Activated T-helper 2 cell treated with anti-CD3 and anti-CD28 coated beads, Interferon-gamma antibody, Interleukin-2, Interleukin-4, amounts not matched to agents 10 μg/mL and 5 μg/mL and 100 μg/mL, durations not matched to agents 14 hours and 24 hours and 36 hours (primary cell): ENCODE measurements at regions of chr3 and their contacts with region 1.

Region 1: GRCh38 chr3:129893581-129894070 is at the start of gene TMCC1:
- DNase-seq: peak; percentile 83
- H3K4me3 Mint-ChIP-seq: peak within 1 kb of the TSS; percentile 88
- H3K27ac Mint-ChIP-seq: peak within 1 kb of the TSS; percentile 85
- H3K4me1 Mint-ChIP-seq: peaks cover 35% of the 10 kb centered on the region
- H3K27me3 Mint-ChIP-seq: no peaks in the 10 kb centered on the region
- total RNA-seq, gene TMCC1: 18.0 and 21.3 TPM in 2 replicates

Region 2: GRCh38 chr3:129606636-129607390 is 286.8 kb before region 1 on chr3 and contains the start of gene PLXND1:
- intact Hi-C with region 1: loop called (anchors 5 kb)
- DNase-seq: peak; percentile 13
- H3K4me3 Mint-ChIP-seq: peak within 1 kb of the TSS; percentile 85
- H3K27ac Mint-ChIP-seq: peak within 1 kb of the TSS; percentile 31
- H3K4me1 Mint-ChIP-seq: peaks cover 10% of the 10 kb centered on the region
- H3K27me3 Mint-ChIP-seq: peaks cover 48% of the 10 kb centered on the region
- total RNA-seq, gene PLXND1: 1.3 and 2.7 TPM in 2 replicates

Region 3: DNA sequence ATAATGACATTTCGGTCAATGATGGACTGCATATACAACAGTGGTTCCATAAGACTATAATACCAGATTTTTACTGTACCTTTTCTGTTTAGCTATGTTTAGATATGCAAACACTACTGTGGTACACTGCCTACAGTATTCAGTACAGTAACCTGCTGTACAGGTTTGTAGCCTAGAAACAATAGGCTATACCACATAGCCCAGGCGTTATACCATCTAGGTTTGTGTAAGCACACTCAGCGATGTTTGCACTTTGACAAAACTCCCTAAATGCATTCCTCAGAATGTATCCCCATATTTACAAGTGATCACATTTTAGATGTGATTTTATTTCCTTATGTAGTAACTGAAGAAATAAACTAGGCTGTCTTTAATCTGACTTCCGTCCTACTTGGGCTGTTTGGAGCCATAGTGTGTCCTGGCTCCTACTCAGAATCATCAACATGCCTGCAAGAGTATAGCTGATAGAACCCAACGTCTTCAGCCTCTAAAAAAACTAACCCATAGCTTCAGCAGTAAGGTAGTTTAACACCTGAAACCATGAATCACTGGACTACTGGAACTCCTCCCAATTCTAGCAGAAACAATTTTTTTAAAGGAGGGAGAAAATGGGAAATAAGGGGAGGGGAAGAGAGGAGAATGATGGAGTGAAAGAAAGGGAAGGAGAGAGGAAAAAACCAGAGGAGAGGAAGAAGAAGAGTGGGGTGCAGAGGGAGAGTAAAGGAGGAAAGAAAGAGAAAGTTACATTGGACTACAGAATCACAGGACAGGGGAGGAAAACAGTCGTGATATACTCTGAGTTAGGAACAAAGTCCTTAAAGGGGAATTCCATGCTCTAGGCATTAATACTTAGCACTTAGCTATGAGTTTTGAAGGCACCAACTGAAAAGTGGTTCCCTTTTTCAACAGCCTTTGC is 219.5 kb before region 1 on chr3:
- intact Hi-C with region 1: no loop called
- DNase-seq: no peak
- H3K4me3 Mint-ChIP-seq: no peak overlapping the region
- H3K27ac Mint-ChIP-seq: no peak overlapping the region
- H3K4me1 Mint-ChIP-seq: peaks cover 2% of the 10 kb centered on the region
- H3K27me3 Mint-ChIP-seq: no peaks in the 10 kb centered on the region

Region 4: GRCh38 chr3:130111185-130111864 is 217.7 kb after region 1 on chr3:
- intact Hi-C with region 1: loop called (anchors 5 kb)
- DNase-seq: peak; percentile 97
- H3K4me3 Mint-ChIP-seq: peak overlapping the region; percentile 92
- H3K27ac Mint-ChIP-seq: peak overlapping the region; percentile 98
- H3K4me1 Mint-ChIP-seq: peaks cover 13% of the 10 kb centered on the region
- H3K27me3 Mint-ChIP-seq: peaks cover 10% of the 10 kb centered on the region